ENCODE measurements at regions of chr20 and their contacts with region 1.

Region 1: GRCh38 chr20:39333211-39333610 is 371.1 kb downstream of the DHX35 start:
- DNase-seq: no peak
- H3K4me3 ChIP-seq: no peak overlapping the region
- H3K27ac ChIP-seq: no peak overlapping the region
- H3K4me1 ChIP-seq: no peaks in the 10 kb centered on the region
- H3K27me3 ChIP-seq: no peaks in the 10 kb centered on the region
- CTCF ChIP-seq: no peak

Region 2: GRCh38 chr20:39524371-39524911 is 191.2 kb after region 1 on chr20:
- CTCF ChIA-PET with region 1: no interaction called
- dilution Hi-C with region 1: no loop called
- in situ Hi-C with region 1: no loop called
- intact Hi-C with region 1: loop called (anchors 5 kb)
- DNase-seq: peak; percentile 43
- H3K4me3 ChIP-seq: no peak overlapping the region
- H3K27ac ChIP-seq: no peak overlapping the region
- H3K4me1 ChIP-seq: no peaks in the 10 kb centered on the region
- H3K27me3 ChIP-seq: no peaks in the 10 kb centered on the region
- CTCF ChIP-seq: no peak